HEK293 (cell line): ENCODE measurements at regions of chr17 and their contacts with region 1.

Region 1: GRCh38 chr17:54956791-54957190 is 11.7 kb downstream of the COX11 start:
- H3K4me3 ChIP-seq: no peak overlapping the region
- H3K27ac ChIP-seq: no peak overlapping the region
- H3K4me1 ChIP-seq: peaks cover 4% of the 10 kb centered on the region; the same call in 1 of the 2 replicates
- CTCF ChIP-seq: no peak

Region 2: GRCh38 chr17:54945671-54946070 is 11.1 kb before region 1 on chr17:
- CTCF ChIA-PET with region 1: no interaction called
- POLR2A ChIA-PET with region 1: no interaction called
- H3K4me3 ChIP-seq: no peak overlapping the region
- H3K27ac ChIP-seq: no peak overlapping the region
- H3K4me1 ChIP-seq: no peaks in the 10 kb centered on the region
- CTCF ChIP-seq: no peak

Region 3: DNA sequence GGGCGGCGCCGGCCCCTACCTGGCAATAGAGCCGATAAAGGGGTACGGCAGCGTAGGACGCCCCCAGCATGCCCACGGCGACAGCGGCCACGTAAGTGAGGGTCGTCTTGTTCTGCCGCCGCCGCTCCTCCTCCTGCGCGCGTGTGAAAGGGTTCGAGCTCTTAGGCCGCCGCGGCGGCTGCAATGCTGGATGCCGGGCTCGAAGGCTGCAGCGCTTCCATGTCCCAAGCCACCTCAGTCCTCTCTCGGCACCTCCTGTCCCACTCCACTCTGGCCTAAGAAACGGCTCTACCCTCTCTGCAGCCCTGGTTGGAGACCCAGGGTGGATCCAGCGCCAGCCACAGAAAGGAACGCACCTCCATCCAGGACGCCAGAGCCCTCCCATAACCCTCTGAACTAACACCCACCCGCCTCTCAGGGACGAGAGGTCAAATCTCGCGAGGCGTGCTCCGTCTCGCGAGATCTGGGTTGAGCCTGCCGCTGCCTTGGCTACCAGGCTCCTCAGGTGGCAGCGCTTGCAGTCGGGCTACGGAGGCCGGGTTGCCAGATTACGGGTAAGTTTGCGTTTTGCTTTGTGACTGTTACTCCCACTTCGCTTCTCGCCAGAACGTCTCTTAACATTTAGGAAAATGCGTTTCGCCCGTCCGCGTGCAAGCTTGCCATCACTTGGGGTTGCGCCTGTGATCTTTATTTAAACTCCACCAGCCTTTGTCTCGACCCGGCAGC is 11.6 kb after region 1 on chr17 and contains the starts of genes COX11 and STXBP4:
- CTCF ChIA-PET with region 1: no interaction called
- POLR2A ChIA-PET with region 1: interaction called, 13 read pairs
- H3K4me3 ChIP-seq: peak within 1 kb of the TSS; percentile 87
- H3K27ac ChIP-seq: peak within 1 kb of the TSS; percentile 82
- H3K4me1 ChIP-seq: no peaks in the 10 kb centered on the region; the same call in 1 of the 2 replicates
- CTCF ChIP-seq: peak; percentile 86